Gastrocnemius medialis (tissue), 4 donors: ENCODE measurements at regions of chr13 and their contacts with region 1.

Region 1: GRCh38 chr13:30395192-30396084 is 26.9 kb upstream of the UBE2L5 start:
- DNase-seq: peak; percentile 88 to 96
- ATAC-seq: peak; percentile 95 to 97
- H3K4me3 ChIP-seq: peak overlapping the region; percentile 59 to 80 (median 69)
- H3K27ac ChIP-seq: peak overlapping the region; percentile 72 to 86 (median 83)
- H3K4me1 ChIP-seq: peaks cover 0 to 7% of the 10 kb centered on the region in 2 donors
- H3K27me3 ChIP-seq: no peaks in the 10 kb centered on the region
- CTCF ChIP-seq: no peak
- POLR2A ChIP-seq: peak; percentile 28 to 41

Region 2: DNA sequence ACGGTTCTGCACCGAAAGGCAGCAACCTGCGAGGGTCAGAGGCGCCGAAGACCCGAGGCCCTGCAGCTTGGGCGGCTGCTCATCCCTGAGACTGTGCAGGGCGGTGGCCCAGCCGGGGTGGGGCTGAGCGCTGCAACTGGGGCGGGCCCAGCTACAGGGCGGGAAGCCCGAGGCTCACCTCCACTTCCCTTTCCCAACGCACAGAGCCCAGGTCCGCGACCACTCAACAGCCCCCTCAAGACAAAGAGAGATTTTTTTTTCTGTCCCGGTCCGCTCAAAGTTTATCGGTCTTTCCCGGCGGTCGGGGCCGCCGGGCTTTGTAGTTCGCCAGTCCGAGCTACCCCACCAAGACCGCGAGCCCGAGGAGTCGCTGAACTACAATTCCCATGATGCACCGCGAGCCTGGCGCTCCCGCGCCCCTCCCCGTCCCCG is 88.7 kb before region 1 on chr13:
- in situ Hi-C with region 1: no loop called
- intact Hi-C with region 1: loop called (anchors 5 kb)
- DNase-seq: peak; percentile 86 to 88
- ATAC-seq: peak; percentile 98 to 99
- H3K4me3 ChIP-seq: peak overlapping the region; percentile 85 to 98 (median 91)
- H3K27ac ChIP-seq: peak overlapping the region; percentile 87 to 96 (median 90)
- H3K4me1 ChIP-seq: peaks cover 15 to 16% of the 10 kb centered on the region in 2 donors
- H3K27me3 ChIP-seq: no peaks in the 10 kb centered on the region
- CTCF ChIP-seq: no peak
- POLR2A ChIP-seq: no peak

Region 3: GRCh38 chr13:30341815-30342570 is 53.4 kb before region 1 on chr13:
- in situ Hi-C with region 1: no loop called
- intact Hi-C with region 1: loop called (anchors 1 kb)
- DNase-seq: peak; percentile 51 to 76
- ATAC-seq: peak; percentile 66 to 76
- H3K4me3 ChIP-seq: no peak overlapping the region
- H3K27ac ChIP-seq: peak overlapping the region; percentile 11 to 63 (median 52)
- H3K4me1 ChIP-seq: peaks cover 31 to 32% of the 10 kb centered on the region in 2 donors
- H3K27me3 ChIP-seq: no peaks in the 10 kb centered on the region
- CTCF ChIP-seq: no peak
- POLR2A ChIP-seq: no peak